T-cell (primary cell): ENCODE measurements at regions of chr4 and their contacts with region 1.

Region 1: DNA sequence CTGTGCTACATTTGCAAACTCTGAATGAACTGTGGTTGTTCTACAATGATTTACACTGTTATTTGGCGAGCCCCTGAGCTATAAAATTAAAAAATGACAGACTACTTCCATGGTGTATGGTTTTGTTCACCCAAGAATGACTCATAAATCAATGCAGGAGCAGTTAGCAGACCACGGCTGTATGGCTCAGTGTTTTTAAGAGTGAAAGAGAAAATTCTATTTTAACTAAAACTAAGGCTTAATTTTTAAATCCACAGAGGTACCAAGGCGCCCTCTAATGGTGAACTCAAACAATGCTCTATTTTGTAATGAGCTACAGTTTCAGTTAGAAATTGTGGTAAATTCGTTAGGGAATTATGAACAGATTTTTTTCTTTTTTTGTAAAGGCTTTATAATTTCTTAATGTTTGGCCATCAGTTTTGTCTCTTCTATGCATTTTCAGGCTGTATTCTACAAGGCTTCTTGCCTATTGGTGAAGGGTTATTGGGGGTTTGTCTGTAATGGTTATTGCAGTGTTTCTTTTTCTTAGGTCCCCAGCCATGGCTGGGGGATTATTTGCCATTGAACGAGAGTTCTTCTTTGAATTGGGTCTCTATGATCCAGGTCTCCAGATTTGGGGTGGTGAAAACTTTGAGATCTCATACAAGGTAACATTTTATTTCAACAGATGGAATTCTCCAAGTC is 32.5 kb downstream of the HMGB2 start:
- DNase-seq: peak in 5 of 35 experiments; percentile 4 to 55 (median 9)
- ATAC-seq: no peak
- H3K4me3 ChIP-seq: no peak overlapping the region
- H3K4me3 Mint-ChIP-seq: no peak overlapping the region
- H3K27ac ChIP-seq: no peak overlapping the region
- H3K27ac Mint-ChIP-seq: peak overlapping the region in 1 of 2 donors; percentile 22
- H3K4me1 ChIP-seq: no peaks in the 10 kb centered on the region
- H3K4me1 Mint-ChIP-seq: peaks cover 8 to 13% (median 9%) of the 10 kb centered on the region in 3 donors
- H3K27me3 ChIP-seq: no peaks in the 10 kb centered on the region
- H3K27me3 Mint-ChIP-seq: no peaks in the 10 kb centered on the region

Region 2: GRCh38 chr4:173013232-173013930 is 288.3 kb before region 1 on chr4:
- CTCF ChIA-PET with region 1: interaction called, 30 to 108 read pairs
- POLR2A ChIA-PET with region 1: no interaction called
- DNase-seq: peak in 31 of 35 experiments; percentile 7 to 69 (median 33)
- ATAC-seq: peak in 2 of 4 experiments; percentile 53 to 68
- H3K4me3 ChIP-seq: no peak overlapping the region
- H3K4me3 Mint-ChIP-seq: no peak overlapping the region
- H3K27ac ChIP-seq: no peak overlapping the region
- H3K27ac Mint-ChIP-seq: no peak overlapping the region
- H3K4me1 ChIP-seq: no peaks in the 10 kb centered on the region
- H3K4me1 Mint-ChIP-seq: no peaks in the 10 kb centered on the region
- H3K27me3 ChIP-seq: peaks cover 0 to 2% of the 10 kb centered on the region in 2 experiments
- H3K27me3 Mint-ChIP-seq: no peaks in the 10 kb centered on the region

Region 3: GRCh38 chr4:173025131-173025530 is 276.5 kb before region 1 on chr4:
- CTCF ChIA-PET with region 1: interaction called, 6 to 26 read pairs
- POLR2A ChIA-PET with region 1: no interaction called
- DNase-seq: peak in 12 of 35 experiments; percentile 0 to 57 (median 6)
- ATAC-seq: peak in 3 of 4 experiments; percentile 40 to 77 (median 40)
- H3K4me3 ChIP-seq: no peak overlapping the region
- H3K4me3 Mint-ChIP-seq: no peak overlapping the region
- H3K27ac ChIP-seq: no peak overlapping the region
- H3K27ac Mint-ChIP-seq: no peak overlapping the region
- H3K4me1 ChIP-seq: no peaks in the 10 kb centered on the region
- H3K4me1 Mint-ChIP-seq: peaks cover 3 to 6% (median 4%) of the 10 kb centered on the region in 3 donors
- H3K27me3 ChIP-seq: no peaks in the 10 kb centered on the region
- H3K27me3 Mint-ChIP-seq: no peaks in the 10 kb centered on the region

Region 4: GRCh38 chr4:173257732-173258717 is 43.6 kb before region 1 on chr4:
- CTCF ChIA-PET with region 1: interaction called, 4 to 14 read pairs
- POLR2A ChIA-PET with region 1: no interaction called
- DNase-seq: peak in 34 of 35 experiments; percentile 9 to 72 (median 42)
- ATAC-seq: peak; percentile 73 to 88 (median 80)
- H3K4me3 ChIP-seq: no peak overlapping the region
- H3K4me3 Mint-ChIP-seq: no peak overlapping the region
- H3K27ac ChIP-seq: no peak overlapping the region
- H3K27ac Mint-ChIP-seq: no peak overlapping the region
- H3K4me1 ChIP-seq: no peaks in the 10 kb centered on the region
- H3K4me1 Mint-ChIP-seq: peaks cover 4 to 14% (median 6%) of the 10 kb centered on the region in 3 donors
- H3K27me3 ChIP-seq: no peaks in the 10 kb centered on the region
- H3K27me3 Mint-ChIP-seq: no peaks in the 10 kb centered on the region

Region 5: DNA sequence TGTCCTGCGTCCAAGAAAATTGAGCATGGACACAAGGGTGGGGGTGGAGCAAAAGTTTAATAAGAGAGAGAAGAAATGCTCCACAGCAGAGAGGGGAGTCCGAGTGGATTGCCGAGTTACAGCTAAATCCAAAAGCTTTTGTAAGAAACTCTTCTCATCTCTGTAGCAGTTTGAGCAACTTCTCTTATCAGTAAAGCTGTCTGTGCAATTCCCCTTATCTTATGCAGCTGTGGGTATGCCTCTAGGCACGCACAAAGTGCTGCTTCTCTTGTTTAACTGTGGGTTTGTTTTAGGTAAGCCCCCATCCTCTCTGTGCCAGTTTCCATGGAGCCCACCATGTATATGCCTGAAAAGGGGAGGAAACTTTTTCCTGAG is 12.3 kb before region 1 on chr4:
- CTCF ChIA-PET with region 1: interaction called, 4 to 23 read pairs
- POLR2A ChIA-PET with region 1: no interaction called
- DNase-seq: no peak
- ATAC-seq: peak in 1 of 4 experiments; percentile 16
- H3K4me3 ChIP-seq: peak overlapping the region in 1 of 2 donors; percentile 1
- H3K4me3 Mint-ChIP-seq: peak overlapping the region; percentile 60 to 75 (median 62)
- H3K27ac ChIP-seq: no peak overlapping the region
- H3K27ac Mint-ChIP-seq: peak overlapping the region in 1 of 2 donors; percentile 37
- H3K4me1 ChIP-seq: peaks cover 0 to 3% of the 10 kb centered on the region in 2 experiments
- H3K4me1 Mint-ChIP-seq: peaks cover 15 to 18% (median 17%) of the 10 kb centered on the region in 3 donors
- H3K27me3 ChIP-seq: no peaks in the 10 kb centered on the region
- H3K27me3 Mint-ChIP-seq: no peaks in the 10 kb centered on the region

Region 6: DNA sequence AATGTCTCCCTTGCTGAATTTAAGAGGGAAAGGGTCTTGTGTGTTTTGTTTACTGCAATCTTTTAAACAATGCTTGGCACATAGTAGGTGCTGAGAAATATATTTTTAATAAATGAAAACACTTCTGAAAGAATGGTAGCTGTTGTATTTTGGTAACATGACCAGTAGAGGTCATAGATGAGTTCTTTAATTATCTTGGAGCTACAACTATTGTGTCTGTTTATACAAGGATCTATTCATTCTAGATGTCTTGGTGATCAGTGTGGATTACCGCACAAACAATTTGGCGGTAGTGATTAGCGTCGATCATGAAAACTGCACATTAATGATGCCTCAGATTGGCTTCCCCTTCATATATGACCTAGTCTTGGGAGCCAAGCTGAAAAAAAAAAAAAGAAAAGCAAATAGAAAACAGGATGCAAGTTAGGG is 118.7 kb after region 1 on chr4:
- CTCF ChIA-PET with region 1: interaction called, 7 to 11 read pairs
- POLR2A ChIA-PET with region 1: no interaction called
- DNase-seq: peak in 1 of 35 experiments; percentile 43
- ATAC-seq: peak in 3 of 4 experiments; percentile 34 to 47 (median 44)
- H3K4me3 ChIP-seq: no peak overlapping the region
- H3K4me3 Mint-ChIP-seq: no peak overlapping the region
- H3K27ac ChIP-seq: no peak overlapping the region
- H3K27ac Mint-ChIP-seq: no peak overlapping the region
- H3K4me1 ChIP-seq: peaks cover 2 to 6% of the 10 kb centered on the region in 2 experiments
- H3K4me1 Mint-ChIP-seq: peaks cover 7 to 13% (median 9%) of the 10 kb centered on the region in 3 donors
- H3K27me3 ChIP-seq: no peaks in the 10 kb centered on the region
- H3K27me3 Mint-ChIP-seq: no peaks in the 10 kb centered on the region